B cell (primary cell): ENCODE measurements at regions of chr21 and their contacts with region 1.

Region 1: GRCh38 chr21:17611414-17612022 is 1.2 kb downstream of the BTG3 start:
- DNase-seq: peak; percentile 87
- ATAC-seq: peak; percentile 42
- H3K4me3 ChIP-seq: peak overlapping the region; percentile 75 to 89 (median 79)
- H3K4me3 Mint-ChIP-seq: peak overlapping the region; percentile 97
- H3K27ac ChIP-seq: peak overlapping the region; percentile 3 to 62
- H3K27ac Mint-ChIP-seq: peak overlapping the region; percentile 96
- H3K4me1 ChIP-seq: peaks cover 8 to 10% of the 10 kb centered on the region in 2 donors
- H3K4me1 Mint-ChIP-seq: peaks cover 18% of the 10 kb centered on the region
- H3K27me3 ChIP-seq: no peaks in the 10 kb centered on the region
- H3K27me3 Mint-ChIP-seq: no peaks in the 10 kb centered on the region
- CTCF ChIP-seq: no peak

Region 2: DNA sequence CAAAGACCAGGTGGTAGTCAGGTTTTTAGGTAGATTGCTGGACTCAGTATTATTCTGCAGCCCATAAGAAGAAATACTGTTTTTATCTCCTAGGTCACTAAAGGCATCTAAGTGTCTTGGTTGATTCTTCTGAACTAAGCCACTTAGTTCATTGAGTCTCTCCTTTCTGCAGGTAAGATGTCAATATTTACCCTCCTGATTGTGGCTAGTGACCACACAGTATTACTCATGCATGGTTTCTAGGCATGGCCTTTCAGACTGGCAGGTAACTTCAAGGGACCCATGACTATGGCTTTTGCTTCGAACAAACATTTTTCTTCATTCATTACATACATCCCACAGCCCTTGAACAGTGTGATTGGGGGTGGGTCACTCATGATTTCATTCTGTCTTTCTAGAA is 401.0 kb before region 1 on chr21:
- CTCF ChIA-PET with region 1: no interaction called
- POLR2A ChIA-PET with region 1: no interaction called
- intact Hi-C with region 1: no loop called
- DNase-seq: no peak
- ATAC-seq: no peak
- H3K4me3 ChIP-seq: no peak overlapping the region
- H3K4me3 Mint-ChIP-seq: no peak overlapping the region
- H3K27ac ChIP-seq: no peak overlapping the region
- H3K27ac Mint-ChIP-seq: no peak overlapping the region
- H3K4me1 ChIP-seq: no peaks in the 10 kb centered on the region
- H3K4me1 Mint-ChIP-seq: no peaks in the 10 kb centered on the region
- H3K27me3 ChIP-seq: no peaks in the 10 kb centered on the region
- H3K27me3 Mint-ChIP-seq: no peaks in the 10 kb centered on the region
- CTCF ChIP-seq: no peak

Region 3: DNA sequence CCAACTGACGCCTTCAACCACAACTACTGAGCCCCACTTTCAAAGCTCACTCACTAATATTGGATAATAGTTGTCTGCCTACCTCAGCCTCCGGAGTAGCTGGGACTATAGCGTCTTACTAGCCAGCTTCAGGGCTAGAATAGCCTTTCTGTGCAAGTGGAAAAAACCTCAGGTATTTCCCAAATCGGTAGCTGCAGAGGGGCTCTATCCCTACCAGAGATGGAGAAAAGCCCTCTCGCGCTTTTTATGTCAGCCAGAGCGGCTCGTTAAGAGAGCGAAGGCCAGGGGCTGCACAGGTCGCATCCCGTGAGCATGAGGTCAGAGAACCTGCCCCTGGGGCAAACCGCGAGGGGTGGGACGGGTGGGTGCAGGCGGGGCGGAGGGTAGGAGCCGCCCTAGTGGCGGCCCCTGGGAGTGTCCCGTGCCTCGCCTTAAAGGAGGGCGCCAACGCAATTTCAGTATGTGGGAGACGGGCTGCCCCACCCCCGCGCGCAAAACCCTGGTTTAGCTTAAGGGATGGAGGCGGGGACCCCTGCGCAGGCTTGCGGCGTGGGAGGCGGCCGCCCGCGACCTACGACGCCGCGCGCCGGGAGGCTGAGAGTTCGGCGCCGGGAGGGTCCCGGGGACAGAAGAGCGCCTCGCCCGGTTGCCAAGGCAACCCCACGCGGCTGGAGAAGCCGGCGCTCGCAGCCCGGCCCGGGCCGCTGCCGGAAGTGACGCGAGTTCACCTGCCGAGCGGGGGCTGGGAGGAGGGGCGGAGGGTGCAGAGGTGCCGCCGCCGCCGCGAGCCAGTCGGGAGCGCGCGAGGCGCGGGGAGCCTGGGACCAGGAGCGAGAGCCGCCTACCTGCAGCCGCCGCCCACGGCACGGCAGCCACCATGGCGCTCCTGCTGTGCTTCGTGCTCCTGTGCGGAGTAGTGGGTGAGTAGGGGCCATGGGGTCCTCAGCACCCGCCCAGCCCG is 99.0 kb before region 1 on chr21 and contains the start of gene CXADR:
- CTCF ChIA-PET with region 1: no interaction called
- POLR2A ChIA-PET with region 1: no interaction called
- intact Hi-C with region 1: loop called (anchors 2 kb)
- DNase-seq: peak; percentile 71
- ATAC-seq: peak; percentile 68
- H3K4me3 ChIP-seq: peak within 1 kb of the TSS; percentile 21 to 68 (median 54)
- H3K4me3 Mint-ChIP-seq: peak within 1 kb of the TSS; percentile 88
- H3K27ac ChIP-seq: no peak within 1 kb of the TSS
- H3K27ac Mint-ChIP-seq: no peak within 1 kb of the TSS
- H3K4me1 ChIP-seq: peaks cover 14 to 21% of the 10 kb centered on the region in 2 donors
- H3K4me1 Mint-ChIP-seq: peaks cover 17% of the 10 kb centered on the region
- H3K27me3 ChIP-seq: peaks cover 0 to 36% (median 27%) of the 10 kb centered on the region in 4 experiments
- H3K27me3 Mint-ChIP-seq: peaks cover 41% of the 10 kb centered on the region
- CTCF ChIP-seq: peak; percentile 40
- total RNA-seq, gene CXADR: not detected in 2 replicates

Region 4: GRCh38 chr21:17585875-17586450 is 25.6 kb before region 1 on chr21:
- CTCF ChIA-PET with region 1: no interaction called
- POLR2A ChIA-PET with region 1: no interaction called
- intact Hi-C with region 1: loop called (anchors 1 kb)
- DNase-seq: peak; percentile 40
- ATAC-seq: no peak
- H3K4me3 ChIP-seq: no peak overlapping the region
- H3K4me3 Mint-ChIP-seq: no peak overlapping the region
- H3K27ac ChIP-seq: no peak overlapping the region
- H3K27ac Mint-ChIP-seq: no peak overlapping the region
- H3K4me1 ChIP-seq: no peaks in the 10 kb centered on the region
- H3K4me1 Mint-ChIP-seq: no peaks in the 10 kb centered on the region
- H3K27me3 ChIP-seq: no peaks in the 10 kb centered on the region
- H3K27me3 Mint-ChIP-seq: no peaks in the 10 kb centered on the region
- CTCF ChIP-seq: peak; percentile 58

Region 5: DNA sequence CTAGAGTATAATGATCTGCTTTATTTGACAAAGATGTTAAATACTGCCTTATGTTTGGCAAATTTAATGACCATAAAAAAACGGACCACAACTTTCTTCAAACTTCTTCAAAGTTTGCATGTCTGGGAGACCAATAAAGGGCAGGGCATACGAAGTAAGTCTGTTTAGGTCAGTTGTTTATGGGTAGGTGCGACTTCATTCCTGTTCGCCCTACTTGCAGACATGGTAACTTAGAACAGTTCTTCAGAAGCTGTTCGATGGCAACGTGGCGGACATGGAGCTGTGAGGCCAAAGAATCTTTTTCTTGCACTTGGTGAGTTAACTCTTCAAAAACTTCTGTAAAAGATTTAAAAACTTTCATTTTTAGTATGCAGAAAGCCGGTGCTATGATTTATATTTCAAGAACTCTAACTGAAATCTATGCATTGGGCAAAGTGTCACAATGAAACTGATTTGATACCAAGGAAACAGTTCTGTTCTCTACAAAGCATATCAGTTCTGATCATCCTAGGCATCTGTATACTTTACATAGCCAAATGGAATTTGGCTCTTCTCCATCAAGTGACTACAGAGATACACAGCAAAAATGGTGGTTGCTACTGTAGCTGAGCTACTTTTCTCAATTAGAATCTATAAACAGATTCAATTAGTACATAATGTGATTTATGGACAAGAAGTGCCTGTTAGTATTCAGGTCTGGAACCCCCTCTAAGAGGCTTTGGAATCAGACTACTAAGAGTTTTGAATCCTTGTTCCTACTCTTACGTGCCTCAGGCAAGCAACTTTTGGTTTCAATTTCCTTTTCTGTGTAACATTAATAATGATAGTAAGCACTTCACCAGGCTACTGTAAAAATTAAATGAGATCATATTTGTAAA is 182.0 kb after region 1 on chr21:
- CTCF ChIA-PET with region 1: no interaction called
- POLR2A ChIA-PET with region 1: no interaction called
- intact Hi-C with region 1: loop called (anchors 2 kb)
- DNase-seq: peak; percentile 52
- ATAC-seq: peak; percentile 64
- H3K4me3 ChIP-seq: peak overlapping the region in 4 of 5 experiments; percentile 9 to 60 (median 38)
- H3K4me3 Mint-ChIP-seq: peak overlapping the region; percentile 76
- H3K27ac ChIP-seq: peak overlapping the region; percentile 29 to 70
- H3K27ac Mint-ChIP-seq: peak overlapping the region; percentile 70
- H3K4me1 ChIP-seq: peaks cover 18 to 25% of the 10 kb centered on the region in 2 donors
- H3K4me1 Mint-ChIP-seq: peaks cover 47% of the 10 kb centered on the region
- H3K27me3 ChIP-seq: no peaks in the 10 kb centered on the region
- H3K27me3 Mint-ChIP-seq: no peaks in the 10 kb centered on the region
- CTCF ChIP-seq: no peak